Gastrocnemius medialis (tissue), 4 donors: ENCODE measurements at regions of chr5 and their contacts with region 1.

Region 1: GRCh38 chr5:78594610-78595457 is 53.7 kb downstream of the LHFPL2 start:
- DNase-seq: peak; percentile 15 to 27
- ATAC-seq: peak; percentile 90 to 94
- H3K4me3 ChIP-seq: no peak overlapping the region
- H3K27ac ChIP-seq: peak overlapping the region in 3 of 4 donors; percentile 39 to 59 (median 55)
- H3K4me1 ChIP-seq: peaks cover 28 to 39% of the 10 kb centered on the region in 2 donors
- H3K27me3 ChIP-seq: no peaks in the 10 kb centered on the region
- CTCF ChIP-seq: no peak
- POLR2A ChIP-seq: no peak

Region 2: GRCh38 chr5:78555870-78556269 is 39.0 kb before region 1 on chr5:
- in situ Hi-C with region 1: no loop called
- intact Hi-C with region 1: loop called (anchors 5 kb)
- DNase-seq: no peak
- ATAC-seq: no peak
- H3K4me3 ChIP-seq: no peak overlapping the region
- H3K27ac ChIP-seq: no peak overlapping the region
- H3K4me1 ChIP-seq: peaks cover 5 to 22% of the 10 kb centered on the region in 2 donors
- H3K27me3 ChIP-seq: no peaks in the 10 kb centered on the region
- CTCF ChIP-seq: no peak
- POLR2A ChIP-seq: no peak

Region 3: GRCh38 chr5:78638423-78638822 is 43.6 kb after region 1 on chr5:
- in situ Hi-C with region 1: no loop called
- intact Hi-C with region 1: loop called (anchors 5 kb)
- DNase-seq: peak in 1 of 2 donors; percentile 30
- ATAC-seq: peak; percentile 70 to 85
- H3K4me3 ChIP-seq: no peak overlapping the region
- H3K27ac ChIP-seq: peak overlapping the region in 3 of 4 donors; percentile 28 to 53 (median 43)
- H3K4me1 ChIP-seq: peaks cover 11 to 28% of the 10 kb centered on the region in 2 donors
- H3K27me3 ChIP-seq: no peaks in the 10 kb centered on the region
- CTCF ChIP-seq: no peak
- POLR2A ChIP-seq: no peak

Region 4: GRCh38 chr5:78706825-78707224 is 112.0 kb after region 1 on chr5:
- in situ Hi-C with region 1: no loop called
- intact Hi-C with region 1: no loop called
- DNase-seq: no peak
- ATAC-seq: no peak
- H3K4me3 ChIP-seq: no peak overlapping the region
- H3K27ac ChIP-seq: no peak overlapping the region
- H3K4me1 ChIP-seq: peaks cover 0 to 3% of the 10 kb centered on the region in 2 donors
- H3K27me3 ChIP-seq: no peaks in the 10 kb centered on the region
- CTCF ChIP-seq: no peak
- POLR2A ChIP-seq: no peak